Activated T-helper 1 cell treated with anti-CD3 and anti-CD28 coated beads, Interleukin-12 subunit alpha, Interleukin-12 subunit beta, Interleukin-2, Interleukin-4 antibody, amounts not matched to agents 30 ng/mL and 10 ng/mL and 1 ng/mL, durations not matched to agents 14 hours and 24 hours and 36 hours (primary cell): ENCODE measurements at regions of chr6 and their contacts with region 1.

Region 1: GRCh38 chr6:152170705-152171667 is 363.5 kb downstream of the ESR1 start:
- DNase-seq: peak; percentile 62
- H3K4me3 Mint-ChIP-seq: peak overlapping the region; percentile 59
- H3K27ac Mint-ChIP-seq: peak overlapping the region; percentile 95
- H3K4me1 Mint-ChIP-seq: peaks cover 25% of the 10 kb centered on the region
- H3K27me3 Mint-ChIP-seq: no peaks in the 10 kb centered on the region

Region 2: GRCh38 chr6:151690768-151691562 is 480.0 kb before region 1 on chr6:
- intact Hi-C with region 1: loop called (anchors 1 kb)
- DNase-seq: peak; percentile 45
- H3K4me3 Mint-ChIP-seq: peak overlapping the region; percentile 78
- H3K27ac Mint-ChIP-seq: peak overlapping the region; percentile 64
- H3K4me1 Mint-ChIP-seq: peaks cover 30% of the 10 kb centered on the region
- H3K27me3 Mint-ChIP-seq: peaks cover 10% of the 10 kb centered on the region

Region 3: GRCh38 chr6:151757506-151758245 is 413.3 kb before region 1 on chr6:
- intact Hi-C with region 1: loop called (anchors 1 kb)
- DNase-seq: peak; percentile 53
- H3K4me3 Mint-ChIP-seq: peak overlapping the region; percentile 38
- H3K27ac Mint-ChIP-seq: peak overlapping the region; percentile 97
- H3K4me1 Mint-ChIP-seq: peaks cover 63% of the 10 kb centered on the region
- H3K27me3 Mint-ChIP-seq: no peaks in the 10 kb centered on the region

Region 4: DNA sequence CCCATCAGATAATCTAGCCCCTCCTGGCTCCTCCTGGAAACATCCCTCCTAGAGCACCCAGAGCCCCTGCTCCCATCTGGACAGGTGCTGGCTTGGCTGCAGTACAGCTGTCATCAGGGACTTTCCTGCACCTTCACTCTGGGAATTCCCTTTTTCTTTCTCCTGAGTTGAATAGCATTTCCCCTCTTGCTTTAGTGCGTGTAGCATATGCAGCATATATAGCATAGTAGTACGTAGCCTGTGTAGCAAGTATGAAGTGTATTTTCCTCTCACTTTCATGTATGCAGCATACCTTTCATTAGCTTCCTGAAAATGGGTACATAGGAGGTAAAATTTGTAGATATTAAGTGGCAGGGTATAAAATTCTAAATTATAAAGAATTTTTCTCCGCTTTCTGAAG is 10.6 kb before region 1 on chr6:
- intact Hi-C with region 1: loop called (anchors 1 kb)
- DNase-seq: no peak
- H3K4me3 Mint-ChIP-seq: no peak overlapping the region
- H3K27ac Mint-ChIP-seq: peak overlapping the region; percentile 82
- H3K4me1 Mint-ChIP-seq: peaks cover 22% of the 10 kb centered on the region
- H3K27me3 Mint-ChIP-seq: no peaks in the 10 kb centered on the region

Region 5: GRCh38 chr6:152184917-152185574 is 14.1 kb after region 1 on chr6:
- intact Hi-C with region 1: loop called (anchors 1 kb)
- DNase-seq: peak; percentile 10
- H3K4me3 Mint-ChIP-seq: peak overlapping the region; percentile 88
- H3K27ac Mint-ChIP-seq: peak overlapping the region; percentile 97
- H3K4me1 Mint-ChIP-seq: peaks cover 66% of the 10 kb centered on the region
- H3K27me3 Mint-ChIP-seq: no peaks in the 10 kb centered on the region

Region 6: GRCh38 chr6:152232501-152233151 is 61.6 kb after region 1 on chr6:
- intact Hi-C with region 1: loop called (anchors 1 kb)
- DNase-seq: no peak
- H3K4me3 Mint-ChIP-seq: peak overlapping the region; percentile 74
- H3K27ac Mint-ChIP-seq: peak overlapping the region; percentile 55
- H3K4me1 Mint-ChIP-seq: peaks cover 28% of the 10 kb centered on the region
- H3K27me3 Mint-ChIP-seq: no peaks in the 10 kb centered on the region

Region 7: DNA sequence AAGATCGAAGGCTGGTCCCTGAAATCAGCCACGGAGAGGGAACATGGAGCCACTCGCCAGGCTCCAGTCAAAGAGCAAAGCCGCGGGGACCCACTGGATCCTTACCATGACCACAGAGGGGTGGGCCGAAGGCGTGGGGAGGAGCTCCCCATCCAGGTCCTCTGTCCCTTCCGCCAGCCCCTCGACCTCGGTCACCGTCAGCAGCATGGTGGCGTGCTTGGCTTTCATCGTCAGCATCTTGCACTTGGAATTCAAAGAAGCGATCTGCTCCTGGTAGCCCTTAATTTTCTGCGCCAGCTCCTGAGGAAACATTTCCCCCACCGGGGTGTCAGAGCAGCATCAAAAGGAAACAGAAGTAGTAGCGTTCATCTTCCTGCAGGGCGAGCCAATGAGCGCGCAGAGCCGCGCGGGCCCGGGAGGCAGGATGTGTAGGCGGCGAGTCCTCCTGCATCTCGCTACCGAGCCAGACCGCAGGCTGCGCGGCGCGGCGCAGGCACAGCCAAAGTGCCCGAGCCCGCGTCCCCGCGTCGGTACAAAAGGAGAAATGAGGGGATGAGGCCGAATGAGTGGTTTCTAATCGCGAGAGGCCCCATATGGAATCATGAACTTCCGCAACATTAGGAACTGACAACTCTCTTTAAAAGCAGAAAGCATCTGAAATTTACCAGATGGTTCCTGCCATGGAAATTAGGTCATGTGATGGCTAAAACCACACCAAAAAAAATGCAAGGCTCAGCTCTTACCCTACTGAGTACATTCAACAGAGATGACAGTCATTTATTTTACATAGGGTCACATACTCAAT is 131.0 kb after region 1 on chr6:
- intact Hi-C with region 1: loop called (anchors 1 kb)
- DNase-seq: peak; percentile 88
- H3K4me3 Mint-ChIP-seq: peak overlapping the region; percentile 98
- H3K27ac Mint-ChIP-seq: peak overlapping the region; percentile 99
- H3K4me1 Mint-ChIP-seq: peaks cover 41% of the 10 kb centered on the region
- H3K27me3 Mint-ChIP-seq: peaks cover 4% of the 10 kb centered on the region

Region 8: GRCh38 chr6:152540381-152540780 is 369.4 kb after region 1 on chr6:
- intact Hi-C with region 1: no loop called
- DNase-seq: no peak
- H3K4me3 Mint-ChIP-seq: no peak overlapping the region
- H3K27ac Mint-ChIP-seq: no peak overlapping the region
- H3K4me1 Mint-ChIP-seq: no peaks in the 10 kb centered on the region
- H3K27me3 Mint-ChIP-seq: peaks cover 2% of the 10 kb centered on the region